ENCODE measurements at regions of chr10 and their contacts with region 1.

Region 1: DNA sequence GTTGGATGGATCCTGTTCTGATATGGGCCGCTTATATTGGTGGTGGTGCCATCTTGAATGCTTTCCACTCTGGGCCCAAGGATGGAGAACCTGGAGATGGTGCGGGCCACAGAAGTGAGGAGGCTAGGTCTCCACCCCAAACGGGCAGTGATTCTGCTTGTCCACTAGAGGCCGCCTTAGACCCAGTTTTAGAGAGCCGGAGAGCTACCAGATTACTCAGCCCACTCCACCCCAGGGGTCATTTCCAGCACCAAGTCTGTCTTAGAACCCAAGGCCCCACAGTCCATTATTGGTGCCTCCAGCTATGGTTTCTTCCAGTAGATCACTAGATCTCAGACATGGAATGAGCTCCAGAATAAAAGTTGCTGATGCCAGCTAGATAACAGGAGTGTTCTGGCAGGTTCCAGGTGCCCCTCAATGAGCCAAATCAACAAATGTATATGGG is 11.8 kb upstream of the CAMK2G start:
- DNase-seq: no peak
- H3K4me3 ChIP-seq: no peak overlapping the region
- CTCF ChIP-seq: peak; percentile 89

Region 2: GRCh38 chr10:73759512-73760115 is 126.5 kb before region 1 on chr10:
- CTCF ChIA-PET with region 1: no interaction called
- POLR2A ChIA-PET with region 1: no interaction called
- DNase-seq: no peak
- H3K4me3 ChIP-seq: no peak overlapping the region
- CTCF ChIP-seq: no peak

Region 3: DNA sequence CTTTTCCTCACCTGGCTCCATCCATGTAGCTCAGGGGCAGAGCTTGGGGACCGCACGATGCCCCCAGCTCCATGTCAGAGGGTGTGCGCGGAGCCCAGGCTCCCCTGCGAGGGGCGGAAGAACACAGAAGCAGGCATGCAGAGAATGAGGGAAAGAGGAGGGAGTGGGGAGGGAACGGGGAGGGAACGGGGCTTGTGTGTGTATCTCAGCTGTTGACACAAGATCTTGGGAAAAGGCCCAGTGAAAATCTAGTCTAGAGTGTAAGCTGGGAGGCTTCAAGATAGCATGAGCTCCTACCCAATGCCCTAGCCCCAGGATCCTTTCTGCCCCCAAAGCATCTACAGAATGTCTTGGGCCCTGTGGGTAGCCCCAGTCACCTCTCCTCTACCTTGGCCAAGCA is 49.7 kb before region 1 on chr10:
- CTCF ChIA-PET with region 1: no interaction called
- POLR2A ChIA-PET with region 1: no interaction called
- DNase-seq: no peak
- H3K4me3 ChIP-seq: no peak overlapping the region
- CTCF ChIP-seq: no peak

Region 4: GRCh38 chr10:73920089-73920488 is 34.0 kb after region 1 on chr10:
- CTCF ChIA-PET with region 1: interaction called, 10 read pairs
- POLR2A ChIA-PET with region 1: interaction called, 3 read pairs
- DNase-seq: no peak
- H3K4me3 ChIP-seq: no peak overlapping the region
- CTCF ChIP-seq: no peak

Region 5: DNA sequence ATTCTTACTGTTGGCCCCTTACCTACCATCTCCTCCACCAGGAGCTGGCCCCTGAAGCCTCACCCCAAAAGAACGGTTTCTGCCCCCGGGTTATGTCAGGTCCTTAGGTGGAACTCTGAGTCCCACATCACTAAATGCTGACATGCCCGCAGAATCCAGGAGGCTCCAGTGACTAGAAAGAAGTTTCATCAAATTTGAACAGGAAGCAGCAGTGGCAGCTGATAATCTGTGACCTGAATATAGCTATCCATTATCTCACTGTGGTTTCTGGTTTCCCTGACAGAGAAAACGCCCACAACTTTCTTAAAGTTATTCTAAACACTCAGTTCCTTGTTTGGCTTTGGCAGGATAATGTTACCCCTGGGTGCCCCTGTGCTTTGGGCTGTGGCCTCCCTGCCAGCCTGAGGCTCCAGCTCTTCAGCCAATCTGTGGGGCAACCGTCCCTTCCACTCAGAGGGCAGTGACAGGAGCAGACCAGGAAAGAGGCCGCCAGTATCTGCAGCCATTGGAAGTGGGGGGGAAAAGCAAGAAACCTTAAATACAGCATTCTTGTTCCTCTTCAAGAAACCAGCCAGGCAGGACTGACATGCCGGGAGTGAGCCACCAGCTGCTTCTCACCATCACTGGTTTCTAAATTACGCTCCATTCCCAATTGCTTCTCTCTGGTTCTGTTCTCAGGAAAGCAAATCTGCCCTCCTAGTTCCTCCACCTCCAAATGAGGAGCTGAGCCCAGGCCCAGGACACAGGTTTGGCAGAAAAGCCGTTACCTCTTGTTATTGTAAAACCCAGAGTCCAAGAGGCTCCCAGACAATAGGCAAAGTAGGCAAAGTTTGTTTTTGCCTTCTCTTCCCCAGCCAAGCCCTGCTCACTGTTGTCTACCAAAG is 70.6 kb after region 1 on chr10:
- CTCF ChIA-PET with region 1: interaction called, 31 read pairs
- POLR2A ChIA-PET with region 1: interaction called, 3 read pairs
- DNase-seq: no peak
- H3K4me3 ChIP-seq: no peak overlapping the region
- CTCF ChIP-seq: no peak

Region 6: DNA sequence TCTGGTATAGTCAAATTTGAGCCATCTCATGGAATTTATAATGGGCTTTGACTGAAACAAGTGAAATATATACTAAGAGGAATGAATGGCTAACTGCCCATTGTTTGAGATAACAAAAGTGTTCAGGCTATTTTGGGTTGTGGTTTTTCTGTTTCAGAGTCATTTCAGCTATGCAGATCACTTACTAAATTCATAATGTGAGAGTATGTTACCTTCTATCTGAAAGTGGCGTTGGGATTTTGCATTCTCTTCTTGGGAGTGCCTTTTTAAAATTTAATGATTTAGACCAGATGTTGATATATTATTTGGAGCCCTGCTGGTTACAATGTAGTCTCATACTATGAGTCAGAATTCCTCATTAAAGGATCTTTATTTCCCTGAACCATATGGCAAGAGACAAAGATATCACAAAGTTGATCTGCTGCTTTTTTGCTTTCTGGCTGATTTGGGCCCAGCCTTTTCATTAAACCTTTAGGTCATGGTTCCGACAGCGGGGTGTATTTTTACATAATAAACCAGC is 122.2 kb after region 1 on chr10:
- CTCF ChIA-PET with region 1: interaction called, 12 read pairs
- POLR2A ChIA-PET with region 1: no interaction called
- DNase-seq: peak; percentile 74
- H3K4me3 ChIP-seq: no peak overlapping the region; the same call in 1 of the 2 replicates
- CTCF ChIP-seq: no peak

Region 7: DNA sequence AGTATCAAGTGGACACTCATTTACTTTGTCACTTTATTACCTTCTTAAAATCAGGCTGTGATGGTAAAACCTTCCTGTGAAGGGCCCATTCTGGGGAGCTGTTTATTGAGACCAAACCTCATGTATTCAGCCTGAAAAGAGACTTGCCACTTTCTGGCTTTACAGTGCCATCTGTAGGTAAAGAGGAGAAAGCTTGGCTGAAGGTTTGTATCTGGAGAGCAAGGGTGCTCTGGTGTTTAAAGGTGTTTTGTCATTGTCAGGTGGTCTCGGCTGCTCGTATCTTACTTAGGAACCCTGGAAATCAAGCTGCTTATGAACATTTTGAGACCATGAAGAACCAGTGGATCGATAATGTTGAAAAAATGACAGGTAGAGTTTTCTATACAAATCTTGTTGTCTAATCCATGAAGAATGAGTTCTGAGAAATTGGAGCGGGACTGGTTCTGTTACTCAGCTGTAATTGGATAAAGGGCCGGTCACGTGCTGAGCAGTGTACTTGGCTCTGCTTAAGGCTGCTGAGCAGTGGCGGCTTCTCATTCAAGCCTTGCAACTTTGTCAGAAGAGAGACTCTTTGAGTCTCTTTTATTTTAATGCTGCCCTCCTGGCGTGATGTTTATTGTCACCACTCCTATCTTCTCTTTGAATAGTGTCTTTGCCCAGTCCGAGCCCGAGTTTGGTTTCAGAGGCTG is 217.6 kb after region 1 on chr10:
- CTCF ChIA-PET with region 1: interaction called, 68 read pairs
- POLR2A ChIA-PET with region 1: no interaction called
- DNase-seq: no peak
- H3K4me3 ChIP-seq: no peak overlapping the region
- CTCF ChIP-seq: peak; percentile 29

Region 8: DNA sequence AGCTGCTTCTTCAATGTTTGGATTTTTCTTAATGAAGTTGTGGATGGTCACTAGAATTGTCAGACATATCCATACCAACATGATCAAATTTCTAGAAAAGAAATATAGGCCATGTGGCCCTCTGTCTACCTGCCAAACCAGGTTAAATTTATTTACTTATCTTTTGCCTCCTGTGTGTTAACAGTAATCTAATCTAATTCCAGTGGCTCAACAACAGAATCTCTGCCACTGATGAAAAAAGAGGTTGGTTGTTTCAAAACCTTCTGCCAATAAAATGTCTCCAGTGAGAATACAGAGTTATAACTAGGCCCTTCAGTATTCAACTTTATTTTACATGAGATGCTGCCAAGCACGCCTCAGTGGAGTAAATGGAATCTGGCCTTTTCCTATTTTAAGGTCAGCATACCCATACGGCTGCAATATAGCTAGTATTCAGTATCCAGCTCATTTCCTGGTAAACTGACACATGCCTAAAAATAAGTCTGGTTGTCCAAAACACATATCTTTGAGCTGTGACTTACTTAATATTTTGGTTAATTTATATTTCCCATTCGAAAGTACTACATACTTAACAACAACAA is 248.2 kb after region 1 on chr10:
- CTCF ChIA-PET with region 1: no interaction called
- POLR2A ChIA-PET with region 1: no interaction called
- DNase-seq: no peak
- H3K4me3 ChIP-seq: no peak overlapping the region
- CTCF ChIP-seq: no peak

Measured in AG04449 (cell line).